ENCODE measurements at regions of chr10 and their contacts with region 1.

Region 1: DNA sequence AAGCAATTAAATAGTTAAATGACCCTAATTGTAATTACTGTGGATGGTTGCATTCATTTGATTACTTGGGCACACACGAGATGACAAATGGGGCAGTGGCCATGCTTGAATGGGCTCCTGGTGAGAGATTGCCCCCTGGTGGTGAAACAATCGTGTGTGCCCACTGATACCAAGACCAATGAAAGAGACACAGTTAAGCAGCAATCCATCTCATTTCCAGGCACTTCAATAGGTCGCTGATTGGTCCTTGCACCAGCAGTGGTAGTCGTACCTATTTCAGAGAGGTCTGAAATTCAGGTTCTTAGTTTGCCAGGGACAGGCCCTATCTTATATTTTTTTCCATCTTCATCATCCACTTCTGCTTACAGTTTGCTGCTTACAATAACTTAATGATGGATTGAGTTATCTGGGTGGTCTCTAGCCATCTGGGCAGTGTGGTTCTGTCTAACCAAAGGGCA is 8.3 kb downstream of the PCBD1 start:
- DNase-seq: peak in 2 of 3 donors; percentile 77 to 93
- ATAC-seq: peak; percentile 95
- H3K4me3 ChIP-seq: no peak overlapping the region
- H3K4me1 ChIP-seq: no peaks in the 10 kb centered on the region
- CTCF ChIP-seq: peak; percentile 75

Region 2: DNA sequence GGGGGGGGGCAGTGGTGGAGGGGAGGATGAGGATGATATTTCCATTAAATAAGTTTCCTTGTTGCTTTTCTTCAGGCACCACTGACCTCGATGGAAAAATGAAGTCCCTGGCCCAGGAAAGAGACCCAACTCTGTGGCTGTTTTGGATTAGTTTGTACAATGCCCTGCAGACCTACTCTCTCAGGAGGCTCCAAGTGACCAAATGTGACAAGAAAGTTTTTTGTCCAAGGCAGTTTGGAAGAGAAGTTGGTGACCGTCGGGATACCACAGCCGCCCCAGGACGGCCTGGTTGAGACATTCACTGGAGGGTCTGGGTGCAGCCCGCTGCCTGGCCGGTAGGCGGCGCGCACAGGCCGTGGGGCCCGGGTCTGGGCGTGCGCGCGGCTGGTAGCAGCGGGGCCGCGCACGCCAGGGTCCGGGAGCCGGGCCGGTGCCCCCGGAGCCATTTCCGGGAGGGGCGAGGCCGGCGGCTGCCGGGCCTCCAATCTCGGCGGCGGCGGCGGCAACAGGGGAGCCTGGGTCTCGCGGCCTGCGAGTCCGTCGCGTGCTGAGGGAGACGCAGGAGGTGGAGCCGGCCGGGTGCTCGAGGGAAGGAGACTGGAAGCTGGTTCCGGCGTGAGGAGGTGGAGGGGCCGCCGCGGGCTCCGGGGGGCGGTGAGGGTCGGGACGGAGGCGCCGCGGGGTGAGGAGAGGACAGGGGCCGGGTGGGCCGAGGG is 64.4 kb before region 1 on chr10 and contains the start of gene SGPL1:
- intact Hi-C with region 1: loop called (anchors 2 to 5 kb)
- DNase-seq: peak; percentile 87 to 94 (median 92)
- ATAC-seq: peak; percentile 99
- H3K4me3 ChIP-seq: peak within 1 kb of the TSS; percentile 59
- H3K4me1 ChIP-seq: peaks cover 8% of the 10 kb centered on the region
- CTCF ChIP-seq: peak; percentile 98
- total RNA-seq, gene SGPL1: 50.5 to 67.2 (median 55.5) TPM